ENCODE measurements at regions of chr5 and their contacts with region 1.

Region 1: DNA sequence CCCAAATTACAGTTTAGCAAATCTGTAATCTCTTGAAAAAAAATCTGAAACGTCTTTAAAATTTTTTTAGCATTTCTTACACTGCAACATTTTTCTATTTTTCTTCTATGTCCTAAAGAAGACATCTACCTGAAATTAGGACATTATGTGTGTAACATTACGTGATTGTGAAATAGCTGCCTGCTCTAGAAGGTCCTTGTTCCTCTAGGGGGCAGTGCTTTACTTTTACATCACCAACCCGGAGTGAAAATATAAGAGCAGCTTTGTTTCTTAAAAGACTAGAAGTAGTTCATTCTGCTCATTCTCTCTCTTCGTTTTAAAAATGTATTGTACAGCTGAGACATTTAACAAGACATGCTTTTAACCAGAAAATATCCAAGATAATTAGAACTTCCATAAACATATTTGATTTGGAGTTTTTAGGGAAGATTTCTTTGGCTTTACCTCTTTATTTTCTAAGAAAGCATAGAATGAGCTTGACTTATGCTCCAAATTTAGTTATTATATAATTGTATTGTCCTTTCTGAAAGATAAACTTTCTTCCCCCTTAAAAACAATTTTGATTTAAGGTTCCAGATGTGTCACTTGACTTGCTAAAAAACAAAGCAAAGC is 48.1 kb upstream of the RIOK2 start:
- DNase-seq: no peak
- ATAC-seq: peak; percentile 76

Region 2: DNA sequence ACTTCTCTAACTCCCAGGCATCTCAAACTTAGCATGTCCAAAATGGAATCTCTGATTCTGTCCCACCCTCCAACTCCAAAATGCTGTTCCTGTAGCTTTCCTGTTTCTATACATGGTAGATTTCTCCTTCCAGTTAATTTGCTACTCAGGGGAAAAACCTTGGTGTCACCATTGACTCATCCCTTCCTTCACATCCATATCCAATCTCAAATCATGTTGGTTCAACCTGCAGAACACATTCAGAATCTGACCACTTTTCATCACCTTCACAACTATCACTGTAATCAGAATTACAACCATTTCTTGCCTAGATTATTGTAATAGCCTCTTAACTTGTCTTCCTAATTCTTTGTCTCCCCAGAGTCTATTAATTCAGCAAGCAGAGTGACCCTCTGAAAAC is 58.9 kb before region 1 on chr5:
- intact Hi-C with region 1: no loop called
- DNase-seq: no peak
- ATAC-seq: no peak

Region 3: DNA sequence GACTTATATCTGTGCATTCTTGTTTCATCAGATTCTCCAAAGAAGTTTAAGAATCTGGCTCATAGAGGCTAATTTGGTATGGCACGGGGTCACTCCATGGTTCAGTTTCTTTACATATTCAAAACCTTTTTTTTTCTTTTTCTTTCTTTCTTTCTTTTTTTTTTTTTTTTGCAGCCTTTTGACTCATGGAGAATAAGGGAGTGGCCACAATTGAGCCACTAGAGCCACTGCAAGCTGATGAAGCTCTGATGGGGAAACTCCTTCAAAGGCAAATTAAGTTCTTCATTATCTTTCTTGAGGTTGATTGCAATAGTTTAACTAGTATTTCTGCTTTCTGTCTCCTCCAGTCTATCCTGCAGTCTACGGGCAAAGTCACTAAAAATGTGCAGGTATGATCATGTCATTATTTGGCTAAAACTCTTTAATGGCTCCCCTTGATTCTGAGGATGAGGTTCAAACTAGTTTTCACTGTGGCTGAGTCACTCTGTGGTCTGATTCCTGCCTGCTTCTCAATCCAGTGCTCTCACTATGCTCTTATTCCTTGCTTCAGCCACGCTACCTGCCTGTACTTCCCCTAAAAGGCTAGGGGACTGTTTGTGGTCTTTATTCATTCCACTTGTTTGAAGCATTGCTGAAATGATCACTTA is 45.5 kb after region 1 on chr5:
- intact Hi-C with region 1: no loop called
- DNase-seq: no peak
- ATAC-seq: no peak

Region 4: DNA sequence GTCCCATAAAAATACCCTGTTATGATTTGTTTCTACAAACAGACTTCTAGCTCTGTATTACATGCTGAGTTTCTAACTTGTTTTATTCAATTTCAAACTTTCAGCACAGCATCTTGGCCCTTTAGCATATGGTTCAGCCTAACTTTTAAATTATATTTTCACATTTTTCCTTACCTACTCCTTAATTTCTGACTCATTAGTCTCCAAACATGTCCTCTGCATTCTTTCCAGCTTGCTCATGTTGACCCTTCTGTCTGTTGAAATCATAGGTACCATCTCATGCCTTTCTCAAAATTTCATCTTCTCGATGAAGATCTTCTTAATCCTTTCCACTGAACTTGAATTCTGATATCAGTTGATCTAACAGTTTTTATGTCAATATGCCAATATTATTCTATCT is 152.9 kb after region 1 on chr5:
- intact Hi-C with region 1: no loop called
- DNase-seq: no peak
- ATAC-seq: no peak

Region 5: DNA sequence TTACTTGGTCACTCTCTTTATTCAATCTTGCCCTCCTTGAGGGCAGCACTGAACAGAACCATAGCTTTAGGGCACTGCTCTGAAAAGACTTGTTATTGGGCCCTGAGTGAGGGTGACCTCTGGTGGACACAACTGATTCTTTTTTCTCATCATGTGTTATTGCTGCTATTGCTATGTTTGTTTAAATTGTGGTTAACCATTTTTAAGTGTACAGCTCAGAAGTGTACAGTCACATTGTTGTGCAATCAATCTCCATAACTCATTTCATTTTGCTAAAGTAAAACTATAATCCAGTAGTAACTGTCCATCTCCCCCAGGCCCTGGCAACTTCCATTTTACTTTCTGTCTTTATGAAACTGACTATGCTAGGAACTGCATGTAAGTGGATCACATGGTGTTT is 303.0 kb after region 1 on chr5:
- intact Hi-C with region 1: loop called (anchors 2 kb)
- DNase-seq: no peak
- ATAC-seq: peak; percentile 74

Measured in Right ventricle myocardium inferior (tissue), 1 donor.